ENCODE measurements at regions of chr18 and their contacts with region 1.

Region 1: GRCh38 chr18:76620321-76621170 is 125.5 kb upstream of the ZNF516 start:
- DNase-seq: peak; percentile 82 to 86
- ATAC-seq: peak; percentile 89
- H3K4me3 ChIP-seq: peak overlapping the region in 1 of 2 donors; percentile 17
- H3K27ac ChIP-seq: no peak overlapping the region
- H3K4me1 ChIP-seq: peaks cover 0 to 3% of the 10 kb centered on the region in 2 donors
- H3K27me3 ChIP-seq: no peaks in the 10 kb centered on the region

Region 2: GRCh38 chr18:76405681-76406356 is 214.7 kb before region 1 on chr18:
- intact Hi-C with region 1: loop called in 1 of 2 experiments (anchors 10 kb)
- DNase-seq: peak in 1 of 2 donors; percentile 85
- ATAC-seq: no peak
- H3K4me3 ChIP-seq: no peak overlapping the region
- H3K27ac ChIP-seq: no peak overlapping the region
- H3K4me1 ChIP-seq: no peaks in the 10 kb centered on the region
- H3K27me3 ChIP-seq: no peaks in the 10 kb centered on the region

Region 3: GRCh38 chr18:76492669-76493212 is 127.8 kb before region 1 on chr18:
- intact Hi-C with region 1: loop called in 1 of 2 experiments (anchors 10 kb)
- DNase-seq: peak; percentile 100
- ATAC-seq: peak; percentile 95
- H3K4me3 ChIP-seq: peak overlapping the region; percentile 54 to 97
- H3K27ac ChIP-seq: peak overlapping the region in 1 of 2 donors; percentile 1
- H3K4me1 ChIP-seq: no peaks in the 10 kb centered on the region
- H3K27me3 ChIP-seq: no peaks in the 10 kb centered on the region

Region 4: DNA sequence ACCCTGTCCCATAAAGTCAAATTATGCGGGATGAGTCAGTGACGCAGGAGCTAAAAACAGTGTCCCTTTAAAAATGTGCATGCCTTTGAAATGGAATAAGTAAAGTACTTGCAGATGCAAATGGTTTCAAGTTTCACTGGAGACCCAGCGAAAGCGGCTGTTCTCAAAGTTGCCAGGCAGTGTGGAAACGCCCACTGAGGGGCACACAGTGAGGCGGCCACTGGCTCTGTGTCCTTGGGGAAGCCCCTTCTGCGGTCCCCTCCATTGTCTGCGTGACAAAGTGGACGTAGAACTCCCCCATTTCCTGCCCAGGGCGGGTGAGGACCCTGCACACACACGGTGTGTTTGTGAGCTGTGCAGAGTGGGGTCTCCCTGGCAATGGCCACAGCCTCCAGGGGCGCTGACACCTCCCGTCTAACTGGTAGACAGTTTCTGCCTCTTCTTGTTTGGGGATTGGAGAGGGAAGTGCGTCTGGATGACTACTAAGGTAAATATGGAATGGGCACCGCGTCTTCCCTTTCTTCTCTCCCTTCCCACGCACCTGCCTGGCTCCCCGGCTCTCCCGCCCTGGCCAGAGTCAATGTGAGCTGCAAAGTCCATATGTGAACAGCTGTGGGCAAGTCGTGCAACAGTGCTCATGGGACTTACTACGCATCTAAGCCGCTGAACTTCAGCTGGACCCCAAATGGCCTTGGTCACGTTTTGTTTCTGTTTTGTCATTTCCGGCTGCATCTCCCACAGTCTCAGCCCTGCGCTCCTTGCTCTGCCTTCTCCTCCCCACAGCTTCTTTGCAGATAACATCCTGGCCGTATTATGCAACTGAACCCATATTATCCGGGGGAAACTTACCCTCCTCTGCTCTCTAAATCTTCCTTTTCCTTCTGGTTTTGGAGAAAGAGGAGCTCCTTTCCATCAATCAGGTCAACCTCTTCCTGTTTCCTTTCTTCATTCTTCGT is 91.8 kb before region 1 on chr18:
- intact Hi-C with region 1: no loop called
- DNase-seq: peak in 1 of 2 donors; percentile 72
- ATAC-seq: peak; percentile 64
- H3K4me3 ChIP-seq: no peak overlapping the region
- H3K27ac ChIP-seq: no peak overlapping the region
- H3K4me1 ChIP-seq: no peaks in the 10 kb centered on the region
- H3K27me3 ChIP-seq: no peaks in the 10 kb centered on the region